ENCODE measurements at regions of chr20 and their contacts with region 1.

Region 1: GRCh38 chr20:3312940-3313682 is 74.1 kb upstream of the SLC4A11 start:
- DNase-seq: no peak
- ATAC-seq: no peak
- H3K4me3 ChIP-seq: no peak overlapping the region
- H3K4me3 Mint-ChIP-seq: no peak overlapping the region
- H3K27ac ChIP-seq: no peak overlapping the region
- H3K27ac Mint-ChIP-seq: no peak overlapping the region
- H3K4me1 ChIP-seq: no peaks in the 10 kb centered on the region
- H3K4me1 Mint-ChIP-seq: no peaks in the 10 kb centered on the region
- H3K27me3 ChIP-seq: no peaks in the 10 kb centered on the region
- H3K27me3 Mint-ChIP-seq: no peaks in the 10 kb centered on the region
- CTCF ChIP-seq: no peak

Region 2: DNA sequence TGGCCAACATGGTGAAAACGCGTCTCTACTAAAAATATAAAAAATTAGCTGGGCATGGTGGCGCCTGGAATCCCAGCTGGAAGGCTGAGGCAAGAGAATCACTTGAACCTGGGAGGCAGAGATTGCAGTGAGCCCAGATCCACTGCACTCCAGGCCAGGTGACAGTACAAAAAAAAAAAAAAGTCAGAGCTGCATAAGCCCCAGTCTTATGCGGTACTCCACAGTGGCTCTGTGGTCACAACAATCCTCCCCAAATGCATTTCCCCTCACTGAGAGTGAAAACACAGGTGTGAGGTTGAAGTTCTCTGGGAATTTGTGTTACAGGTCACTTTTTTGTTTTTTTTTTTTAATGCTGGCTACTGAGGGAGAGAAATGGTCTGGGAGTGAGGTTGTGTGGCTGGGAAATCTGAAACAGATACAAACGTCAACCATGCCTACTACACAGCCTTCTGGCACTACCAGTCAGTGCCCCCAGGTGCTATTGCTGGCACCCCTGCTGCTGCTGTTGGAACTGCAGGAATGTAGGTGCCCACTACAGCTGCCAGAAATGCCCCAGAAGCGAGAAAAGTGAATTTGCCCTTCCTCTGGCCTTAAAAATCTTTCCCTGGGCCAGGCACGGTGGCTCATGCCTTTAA is 261.6 kb before region 1 on chr20:
- CTCF ChIA-PET with region 1: interaction called, 22 read pairs
- POLR2A ChIA-PET with region 1: interaction called, 3 read pairs
- intact Hi-C with region 1: loop called (anchors 1 kb)
- DNase-seq: no peak
- ATAC-seq: peak; percentile 47
- H3K4me3 ChIP-seq: no peak overlapping the region
- H3K4me3 Mint-ChIP-seq: no peak overlapping the region
- H3K27ac ChIP-seq: no peak overlapping the region
- H3K27ac Mint-ChIP-seq: no peak overlapping the region
- H3K4me1 ChIP-seq: peaks cover 18% of the 10 kb centered on the region
- H3K4me1 Mint-ChIP-seq: peaks cover 18% of the 10 kb centered on the region
- H3K27me3 ChIP-seq: no peaks in the 10 kb centered on the region
- H3K27me3 Mint-ChIP-seq: no peaks in the 10 kb centered on the region
- CTCF ChIP-seq: no peak